CD4-positive, alpha-beta memory T cell (primary cell): ENCODE measurements at regions of chr15 and their contacts with region 1.

Region 1: DNA sequence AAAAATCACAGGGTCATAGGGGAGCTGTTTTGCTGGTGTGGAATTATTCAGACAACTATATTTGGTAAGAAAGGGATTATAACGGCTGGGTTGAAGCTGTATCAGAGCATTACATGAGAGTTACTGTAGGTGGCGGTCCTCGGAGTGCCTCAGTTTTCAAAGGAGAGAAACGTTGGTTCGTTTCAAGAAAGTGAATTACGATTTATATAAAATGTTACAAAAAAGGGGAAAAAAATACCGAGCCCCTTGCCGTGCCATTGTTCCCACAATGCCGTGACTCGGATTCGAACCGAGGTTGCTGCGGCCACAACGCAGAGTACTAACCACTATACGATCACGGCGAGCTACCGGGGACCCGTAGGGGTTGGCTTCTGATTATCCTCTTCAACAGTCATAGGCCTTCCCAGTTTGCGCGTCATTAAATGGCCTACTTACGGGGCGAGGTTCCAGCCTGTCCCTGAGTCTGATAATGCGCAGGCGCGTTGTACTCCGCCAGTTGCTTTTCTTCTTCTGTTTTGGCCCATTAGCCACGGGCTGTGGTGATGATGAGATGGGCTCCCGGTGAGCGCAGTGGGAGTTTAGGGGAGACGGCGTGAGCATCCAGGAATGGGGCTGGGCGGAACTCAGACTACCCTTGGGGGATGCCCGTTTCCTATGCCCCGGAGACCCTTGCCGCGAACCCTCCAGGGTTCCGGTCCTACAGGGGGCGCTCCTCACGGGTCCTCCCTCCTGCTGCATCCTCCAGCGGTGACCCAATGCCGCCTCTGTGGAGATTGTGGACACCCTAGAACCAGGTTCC is 10.8 kb upstream of the SHF start:
- DNase-seq: peak; percentile 97 to 98 (median 98)
- H3K4me3 ChIP-seq: peak overlapping the region; percentile 72 to 97
- H3K4me3 Mint-ChIP-seq: no peak overlapping the region
- H3K27ac ChIP-seq: peak overlapping the region; percentile 86
- H3K27ac Mint-ChIP-seq: no peak overlapping the region
- H3K4me1 ChIP-seq: peaks cover 18% of the 10 kb centered on the region
- H3K4me1 Mint-ChIP-seq: peaks cover 0 to 19% (median 10%) of the 10 kb centered on the region in 4 donors
- H3K27me3 ChIP-seq: no peaks in the 10 kb centered on the region
- H3K27me3 Mint-ChIP-seq: peaks cover 0 to 9% of the 10 kb centered on the region in 2 donors

Region 2: DNA sequence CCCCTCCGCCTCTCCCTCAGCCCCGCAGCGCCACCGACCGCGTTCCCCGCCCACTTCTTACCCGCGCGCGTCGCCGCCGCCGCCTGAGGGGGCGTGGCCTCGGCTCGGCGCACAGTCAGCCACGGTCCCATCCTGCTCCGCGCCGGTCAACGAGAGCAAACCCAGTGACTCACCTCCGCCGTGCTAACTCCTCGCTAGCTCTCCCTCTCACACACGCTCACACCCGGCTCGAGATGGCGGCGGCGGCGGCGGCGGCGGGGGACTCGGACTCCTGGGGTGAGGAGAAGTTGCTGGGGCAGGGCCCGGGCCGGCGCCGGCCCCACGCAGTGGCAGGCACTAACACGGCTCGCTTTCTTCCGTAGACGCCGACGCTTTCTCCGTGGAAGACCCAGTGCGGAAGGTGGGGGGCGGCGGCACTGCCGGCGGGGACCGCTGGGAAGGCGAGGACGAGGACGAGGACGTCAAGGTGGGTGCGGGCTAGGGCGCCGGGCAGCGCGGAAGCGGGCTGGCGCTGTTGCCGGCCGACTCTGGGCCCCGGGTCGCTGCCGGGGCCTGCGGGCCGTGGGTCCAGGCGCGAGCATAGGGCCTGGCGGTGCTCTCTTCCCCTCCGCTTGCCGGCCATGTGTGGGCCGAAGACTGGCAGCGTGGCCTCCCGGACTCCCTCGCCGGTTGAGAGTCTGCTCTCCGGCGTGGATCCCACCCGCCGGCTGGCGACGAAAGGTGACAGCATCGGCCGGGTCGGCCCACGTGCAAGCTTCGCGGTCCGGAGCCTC is 661.4 kb before region 1 on chr15 and contains the start of gene EIF3J:
- CTCF ChIA-PET with region 1: no interaction called
- POLR2A ChIA-PET with region 1: interaction called, 4 read pairs
- intact Hi-C with region 1: loop called (anchors 2 kb)
- DNase-seq: peak; percentile 94 to 96 (median 96)
- H3K4me3 ChIP-seq: peak within 1 kb of the TSS; percentile 71 to 90
- H3K4me3 Mint-ChIP-seq: peak within 1 kb of the TSS; percentile 83 to 96 (median 92)
- H3K27ac ChIP-seq: peak within 1 kb of the TSS; percentile 91
- H3K27ac Mint-ChIP-seq: peak within 1 kb of the TSS; percentile 88 to 97 (median 96)
- H3K4me1 ChIP-seq: peaks cover 48% of the 10 kb centered on the region
- H3K4me1 Mint-ChIP-seq: peaks cover 36 to 68% (median 48%) of the 10 kb centered on the region in 4 donors
- H3K27me3 ChIP-seq: no peaks in the 10 kb centered on the region
- H3K27me3 Mint-ChIP-seq: no peaks in the 10 kb centered on the region
- total RNA-seq, gene EIF3J: 65.0 to 76.8 TPM

Region 3: DNA sequence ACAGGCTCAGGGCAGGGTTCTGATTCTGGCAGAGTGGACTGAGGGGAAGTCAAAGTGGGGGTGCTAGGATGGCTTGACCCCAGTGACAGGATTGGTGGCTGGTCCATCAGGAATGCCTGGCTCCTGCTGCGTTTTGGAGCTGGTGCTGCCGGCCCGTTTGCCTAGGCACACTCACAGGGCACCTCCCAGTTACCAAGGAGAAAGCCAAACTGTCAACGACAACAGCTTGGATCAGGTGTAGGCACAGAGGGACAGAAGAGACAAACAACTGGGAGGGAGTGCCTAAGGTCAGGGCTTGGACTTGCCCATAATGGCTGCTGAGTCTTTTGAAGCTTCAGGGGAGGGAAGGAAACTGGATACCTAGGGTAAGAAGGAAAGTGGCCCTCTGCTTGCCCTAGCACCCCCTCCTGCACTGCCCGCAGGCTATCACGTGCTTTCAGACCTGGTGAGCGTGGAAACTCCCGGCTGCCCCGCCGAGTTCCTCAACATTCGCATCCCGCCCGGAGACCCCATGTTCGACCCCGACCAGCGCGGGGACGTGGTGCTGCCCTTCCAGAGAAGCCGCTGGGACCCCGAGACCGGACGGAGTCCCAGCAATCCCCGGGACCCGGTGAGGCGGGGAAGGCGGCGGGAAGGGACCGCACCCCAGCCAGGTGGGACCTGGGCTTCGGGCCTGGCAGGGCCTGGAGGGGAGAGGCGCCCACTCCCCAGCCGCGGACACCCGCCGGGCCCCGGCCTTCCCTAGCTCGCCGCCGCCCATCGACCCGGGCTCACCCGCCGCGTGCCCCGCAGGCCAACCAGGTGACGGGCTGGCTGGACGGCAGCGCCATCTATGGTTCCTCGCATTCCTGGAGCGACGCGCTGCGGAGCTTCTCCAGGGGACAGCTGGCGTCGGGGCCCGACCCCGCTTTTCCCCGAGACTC is 63.6 kb before region 1 on chr15:
- CTCF ChIA-PET with region 1: no interaction called
- POLR2A ChIA-PET with region 1: no interaction called
- intact Hi-C with region 1: no loop called
- DNase-seq: no peak
- H3K4me3 ChIP-seq: no peak overlapping the region
- H3K4me3 Mint-ChIP-seq: peak overlapping the region; percentile 64 to 84 (median 72)
- H3K27ac ChIP-seq: no peak overlapping the region
- H3K27ac Mint-ChIP-seq: no peak overlapping the region
- H3K4me1 ChIP-seq: peaks cover 11% of the 10 kb centered on the region
- H3K4me1 Mint-ChIP-seq: peaks cover 4 to 25% (median 11%) of the 10 kb centered on the region in 4 donors
- H3K27me3 ChIP-seq: peaks cover 25% of the 10 kb centered on the region
- H3K27me3 Mint-ChIP-seq: peaks cover 30 to 35% of the 10 kb centered on the region in 2 donors

Region 4: GRCh38 chr15:45179221-45179985 is 19.1 kb before region 1 on chr15:
- CTCF ChIA-PET with region 1: interaction called, 18 read pairs
- POLR2A ChIA-PET with region 1: interaction called, 201 read pairs
- intact Hi-C with region 1: no loop called
- DNase-seq: peak; percentile 33 to 54 (median 42)
- H3K4me3 ChIP-seq: no peak overlapping the region
- H3K4me3 Mint-ChIP-seq: no peak overlapping the region
- H3K27ac ChIP-seq: no peak overlapping the region
- H3K27ac Mint-ChIP-seq: peak overlapping the region in 1 of 7 donors; percentile 73
- H3K4me1 ChIP-seq: no peaks in the 10 kb centered on the region
- H3K4me1 Mint-ChIP-seq: peaks cover 4 to 10% (median 8%) of the 10 kb centered on the region in 4 donors
- H3K27me3 ChIP-seq: no peaks in the 10 kb centered on the region
- H3K27me3 Mint-ChIP-seq: no peaks in the 10 kb centered on the region

Region 5: GRCh38 chr15:45279024-45279698 is 80.6 kb after region 1 on chr15:
- CTCF ChIA-PET with region 1: no interaction called
- POLR2A ChIA-PET with region 1: interaction called, 7 read pairs
- intact Hi-C with region 1: loop called (anchors 1 kb)
- DNase-seq: peak; percentile 95 to 99 (median 98)
- H3K4me3 ChIP-seq: peak overlapping the region; percentile 82 to 83
- H3K4me3 Mint-ChIP-seq: peak overlapping the region; percentile 89 to 98 (median 93)
- H3K27ac ChIP-seq: peak overlapping the region; percentile 70
- H3K27ac Mint-ChIP-seq: peak overlapping the region; percentile 87 to 98 (median 96)
- H3K4me1 ChIP-seq: peaks cover 13% of the 10 kb centered on the region
- H3K4me1 Mint-ChIP-seq: peaks cover 7 to 26% (median 16%) of the 10 kb centered on the region in 4 donors
- H3K27me3 ChIP-seq: no peaks in the 10 kb centered on the region
- H3K27me3 Mint-ChIP-seq: no peaks in the 10 kb centered on the region

Region 6: DNA sequence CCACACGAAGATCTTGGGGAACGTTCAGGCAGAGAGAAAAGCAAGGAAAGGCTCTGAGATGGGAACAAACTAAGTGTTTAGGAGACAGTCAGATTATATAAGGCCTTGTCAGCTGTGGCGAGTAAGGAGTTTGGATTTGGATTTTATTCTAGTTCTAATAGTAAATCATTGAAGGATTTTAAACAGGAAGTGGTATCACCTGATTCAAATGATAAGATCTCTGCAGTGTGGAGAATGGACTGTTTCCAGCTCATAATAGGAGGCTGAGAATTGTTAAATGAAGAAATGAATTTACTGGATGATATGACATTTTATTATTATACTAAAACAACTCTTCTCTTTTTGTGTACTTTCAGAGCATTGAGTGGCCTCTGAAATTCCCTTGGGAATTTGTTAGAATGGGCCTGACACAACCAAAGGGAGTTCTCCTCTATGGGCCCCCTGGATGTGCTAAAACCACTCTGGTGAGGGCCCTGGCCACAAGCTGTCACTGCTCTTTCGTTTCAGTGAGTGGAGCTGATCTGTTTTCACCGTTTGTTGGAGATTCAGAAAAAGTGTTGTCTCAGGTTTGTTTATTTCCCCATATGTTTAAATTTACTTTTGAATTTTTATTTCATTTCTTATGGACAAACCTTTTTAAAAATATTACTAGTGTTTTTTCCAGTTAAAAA is 215.8 kb after region 1 on chr15:
- CTCF ChIA-PET with region 1: no interaction called
- POLR2A ChIA-PET with region 1: no interaction called
- intact Hi-C with region 1: no loop called
- DNase-seq: peak in 1 of 5 donors; percentile 10
- H3K4me3 ChIP-seq: no peak overlapping the region
- H3K4me3 Mint-ChIP-seq: peak overlapping the region in 5 of 8 donors; percentile 1 to 40 (median 18)
- H3K27ac ChIP-seq: no peak overlapping the region
- H3K27ac Mint-ChIP-seq: peak overlapping the region; percentile 39 to 66 (median 47)
- H3K4me1 ChIP-seq: peaks cover 22% of the 10 kb centered on the region
- H3K4me1 Mint-ChIP-seq: peaks cover 17 to 28% (median 20%) of the 10 kb centered on the region in 4 donors
- H3K27me3 ChIP-seq: no peaks in the 10 kb centered on the region
- H3K27me3 Mint-ChIP-seq: no peaks in the 10 kb centered on the region

Region 7: DNA sequence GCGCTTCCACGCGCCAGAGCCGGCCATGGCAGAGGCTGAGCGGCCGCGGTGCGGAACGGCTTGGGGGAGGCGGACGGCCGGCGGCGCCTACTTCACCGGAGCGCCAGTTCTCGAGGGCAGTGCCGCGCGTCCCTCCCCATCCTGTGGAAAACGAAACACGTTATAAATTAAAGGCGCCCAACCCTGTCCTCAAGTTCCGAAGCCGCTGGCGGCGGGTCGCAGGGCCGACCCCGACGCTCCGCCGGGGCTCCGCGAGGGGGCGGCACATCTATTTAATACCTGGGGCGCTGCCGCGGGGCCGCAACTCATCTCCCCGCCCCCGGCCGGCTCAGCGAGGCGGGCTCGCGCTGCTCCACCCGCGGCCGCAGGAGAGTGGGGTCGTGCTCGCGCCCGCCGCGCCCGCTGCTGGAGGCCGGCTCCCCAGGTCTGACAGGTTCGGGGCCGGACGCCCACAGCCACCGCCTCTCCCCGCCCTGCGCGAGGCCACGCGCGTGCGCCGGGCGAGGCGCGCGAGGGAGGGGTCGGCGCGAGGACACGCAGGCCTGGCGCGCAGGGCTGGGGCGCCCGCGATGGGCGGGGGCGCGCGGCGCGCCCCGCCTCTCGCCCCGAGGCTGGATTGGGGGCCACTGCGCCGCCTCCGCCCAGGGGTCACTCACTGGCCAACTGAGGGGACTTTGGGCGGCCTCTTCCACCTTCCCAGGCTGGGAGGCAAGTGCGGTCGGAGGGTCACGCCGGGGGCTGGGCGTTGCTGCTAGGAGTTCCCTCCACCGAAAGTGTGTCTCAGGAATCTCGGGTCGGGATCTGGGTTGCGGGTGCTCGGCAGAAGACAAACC is 324.0 kb after region 1 on chr15 and contains the start of gene SLC30A4:
- CTCF ChIA-PET with region 1: no interaction called
- POLR2A ChIA-PET with region 1: no interaction called
- intact Hi-C with region 1: loop called (anchors 1 kb)
- DNase-seq: peak; percentile 68 to 75 (median 69)
- H3K4me3 ChIP-seq: peak within 1 kb of the TSS; percentile 62 to 82
- H3K4me3 Mint-ChIP-seq: peak within 1 kb of the TSS; percentile 87 to 96 (median 94)
- H3K27ac ChIP-seq: peak within 1 kb of the TSS; percentile 54
- H3K27ac Mint-ChIP-seq: peak within 1 kb of the TSS; percentile 36 to 93 (median 88)
- H3K4me1 ChIP-seq: peaks cover 15% of the 10 kb centered on the region
- H3K4me1 Mint-ChIP-seq: peaks cover 18 to 28% (median 21%) of the 10 kb centered on the region in 4 donors
- H3K27me3 ChIP-seq: no peaks in the 10 kb centered on the region
- H3K27me3 Mint-ChIP-seq: no peaks in the 10 kb centered on the region
- total RNA-seq, gene SLC30A4: 3.6 to 3.8 TPM

Region 8: DNA sequence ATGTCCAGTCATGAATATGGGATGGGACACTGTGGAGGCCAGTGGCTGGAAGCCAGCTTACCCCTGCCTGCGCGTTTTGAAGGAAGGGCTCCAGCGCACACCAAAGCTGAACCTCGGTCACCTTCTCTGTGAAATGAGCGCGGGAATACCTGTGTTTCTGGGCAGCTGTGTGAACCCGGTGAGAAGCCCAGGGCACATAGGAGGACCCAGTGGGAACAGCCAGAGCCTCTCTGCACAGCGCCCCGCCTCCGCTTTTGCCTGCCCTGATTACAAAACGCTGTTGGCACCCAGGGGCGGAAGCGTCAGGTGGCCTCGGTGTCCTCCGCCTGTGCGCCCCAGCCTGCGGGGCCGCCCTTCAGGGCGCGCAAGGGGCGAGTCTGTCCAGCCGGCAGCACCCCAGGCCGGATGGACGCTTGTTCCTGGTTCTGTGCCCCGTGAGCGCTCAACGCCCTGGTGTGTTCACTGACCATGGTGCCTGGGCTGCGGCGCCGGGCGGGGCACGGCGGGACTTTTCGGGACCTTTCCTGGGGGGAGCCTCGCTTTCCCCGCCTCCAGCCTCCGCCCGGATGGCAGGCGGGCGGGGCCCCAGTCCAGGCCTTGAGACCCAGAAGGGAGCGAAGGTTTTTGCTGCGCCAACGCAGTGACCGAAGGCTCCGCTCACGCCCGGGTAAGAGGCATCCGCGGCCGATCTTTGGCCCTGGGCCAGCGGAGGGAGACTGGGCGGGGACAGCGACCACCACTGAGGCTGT is 436.1 kb after region 1 on chr15 and contains the start of gene SQOR:
- CTCF ChIA-PET with region 1: interaction called, 3 read pairs
- POLR2A ChIA-PET with region 1: interaction called, 10 read pairs
- intact Hi-C with region 1: loop called (anchors 2 kb)
- DNase-seq: peak; percentile 63 to 71 (median 67)
- H3K4me3 ChIP-seq: peak within 1 kb of the TSS; percentile 76 to 90
- H3K4me3 Mint-ChIP-seq: peak within 1 kb of the TSS; percentile 88 to 99 (median 98)
- H3K27ac ChIP-seq: peak within 1 kb of the TSS; percentile 67
- H3K27ac Mint-ChIP-seq: peak within 1 kb of the TSS; percentile 90 to 96 (median 95)
- H3K4me1 ChIP-seq: peaks cover 45% of the 10 kb centered on the region
- H3K4me1 Mint-ChIP-seq: peaks cover 26 to 53% (median 41%) of the 10 kb centered on the region in 4 donors
- H3K27me3 ChIP-seq: no peaks in the 10 kb centered on the region
- H3K27me3 Mint-ChIP-seq: no peaks in the 10 kb centered on the region
- total RNA-seq, gene SQOR: 47.9 to 51.0 TPM